AG04449 (cell line): ENCODE measurements at regions of chr16 and their contacts with region 1.

Region 1: GRCh38 chr16:4506450-4506849 is 30.3 kb downstream of the HMOX2 start:
- DNase-seq: no peak
- H3K4me3 ChIP-seq: no peak overlapping the region
- CTCF ChIP-seq: peak; percentile 82

Region 2: GRCh38 chr16:4371357-4372000 is 135.0 kb before region 1 on chr16 and contains the start of gene VASN:
- CTCF ChIA-PET with region 1: no interaction called
- POLR2A ChIA-PET with region 1: no interaction called
- DNase-seq: no peak
- H3K4me3 ChIP-seq: peak within 1 kb of the TSS; percentile 93
- CTCF ChIP-seq: no peak

Region 3: GRCh38 chr16:4487955-4488498 is 18.4 kb before region 1 on chr16:
- CTCF ChIA-PET with region 1: interaction called, 57 read pairs
- POLR2A ChIA-PET with region 1: no interaction called
- DNase-seq: no peak
- H3K4me3 ChIP-seq: no peak overlapping the region
- CTCF ChIP-seq: no peak

Region 4: GRCh38 chr16:4517812-4518680 is 11.6 kb after region 1 on chr16:
- CTCF ChIA-PET with region 1: interaction called, 49 read pairs
- POLR2A ChIA-PET with region 1: no interaction called
- DNase-seq: no peak
- H3K4me3 ChIP-seq: no peak overlapping the region
- CTCF ChIP-seq: peak; percentile 59

Region 5: GRCh38 chr16:4538350-4539235 is 32.1 kb after region 1 on chr16 and contains the start of gene CDIP1:
- CTCF ChIA-PET with region 1: interaction called, 267 read pairs
- POLR2A ChIA-PET with region 1: no interaction called
- DNase-seq: peak; percentile 46
- H3K4me3 ChIP-seq: peak within 1 kb of the TSS; percentile 82
- CTCF ChIP-seq: no peak

Region 6: DNA sequence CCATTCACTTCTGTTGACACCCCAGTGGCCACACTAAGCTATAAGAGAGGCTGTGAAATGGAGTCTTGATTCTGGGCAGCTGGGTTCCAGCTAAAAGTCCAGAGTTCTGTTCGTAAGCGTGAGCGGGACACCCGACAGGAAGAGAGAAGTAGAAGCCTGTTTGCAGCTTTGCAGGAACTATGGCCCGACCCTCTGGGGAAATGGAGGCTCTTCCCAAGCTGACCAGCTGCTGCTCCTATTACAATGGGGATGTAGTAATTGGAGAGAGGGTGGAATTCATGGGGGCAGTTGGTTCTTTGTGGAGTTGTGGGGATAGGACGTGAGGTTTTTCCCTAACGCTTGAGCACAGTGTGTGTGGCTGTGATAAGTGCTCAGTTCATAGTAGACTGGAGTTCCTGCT is 79.8 kb after region 1 on chr16:
- CTCF ChIA-PET with region 1: interaction called, 69 read pairs
- POLR2A ChIA-PET with region 1: no interaction called
- DNase-seq: no peak
- H3K4me3 ChIP-seq: no peak overlapping the region
- CTCF ChIP-seq: no peak